ENCODE measurements at regions of chr5 and their contacts with region 1.

Region 1: DNA sequence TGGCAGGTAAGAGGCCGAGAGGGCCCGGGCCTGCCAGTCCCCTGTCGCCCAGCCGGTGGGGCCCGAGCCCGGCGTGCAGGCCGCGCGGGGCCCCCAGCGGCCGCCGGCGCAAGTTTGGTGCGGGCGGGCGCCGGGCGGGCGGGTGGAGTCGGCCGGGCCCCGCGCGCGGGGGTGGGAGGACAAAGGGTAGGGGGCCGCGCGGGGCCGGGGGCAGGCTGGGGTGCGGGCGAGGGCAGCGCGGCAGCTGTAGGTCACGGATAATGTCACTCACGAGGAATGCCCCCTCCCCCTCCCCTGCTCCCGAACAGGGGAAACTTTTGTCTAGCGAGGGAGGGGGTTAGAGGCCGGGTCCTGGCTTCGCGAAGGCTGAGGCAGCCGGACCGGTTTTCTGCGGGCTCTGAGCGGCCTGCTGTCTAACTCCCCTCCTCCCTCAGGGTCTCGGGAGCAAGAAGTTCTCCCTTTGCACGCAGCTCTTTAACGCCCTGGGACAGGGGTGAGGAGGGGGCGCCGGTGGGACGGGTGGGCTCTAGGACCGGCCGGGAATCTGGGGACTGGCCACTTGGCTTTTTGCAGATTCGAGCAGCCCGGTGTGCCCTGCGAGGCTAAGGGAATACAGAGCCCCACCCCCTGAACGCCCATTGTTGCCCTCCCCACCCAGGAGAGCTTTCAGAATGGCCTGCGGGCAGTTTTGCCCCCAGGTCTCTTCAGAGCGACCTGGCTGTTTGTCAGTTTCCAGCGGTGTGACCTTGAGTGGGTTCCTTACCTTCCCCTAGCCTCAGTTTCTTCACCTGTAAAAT is 21.3 kb upstream of the NDST1 start:
- DNase-seq: peak; percentile 76
- ATAC-seq: peak; percentile 38
- H3K4me3 Mint-ChIP-seq: peak overlapping the region; percentile 79
- H3K27ac Mint-ChIP-seq: peak overlapping the region; percentile 85
- H3K4me1 Mint-ChIP-seq: peaks cover 53% of the 10 kb centered on the region
- H3K27me3 Mint-ChIP-seq: no peaks in the 10 kb centered on the region
- CTCF ChIP-seq: no peak

Region 2: DNA sequence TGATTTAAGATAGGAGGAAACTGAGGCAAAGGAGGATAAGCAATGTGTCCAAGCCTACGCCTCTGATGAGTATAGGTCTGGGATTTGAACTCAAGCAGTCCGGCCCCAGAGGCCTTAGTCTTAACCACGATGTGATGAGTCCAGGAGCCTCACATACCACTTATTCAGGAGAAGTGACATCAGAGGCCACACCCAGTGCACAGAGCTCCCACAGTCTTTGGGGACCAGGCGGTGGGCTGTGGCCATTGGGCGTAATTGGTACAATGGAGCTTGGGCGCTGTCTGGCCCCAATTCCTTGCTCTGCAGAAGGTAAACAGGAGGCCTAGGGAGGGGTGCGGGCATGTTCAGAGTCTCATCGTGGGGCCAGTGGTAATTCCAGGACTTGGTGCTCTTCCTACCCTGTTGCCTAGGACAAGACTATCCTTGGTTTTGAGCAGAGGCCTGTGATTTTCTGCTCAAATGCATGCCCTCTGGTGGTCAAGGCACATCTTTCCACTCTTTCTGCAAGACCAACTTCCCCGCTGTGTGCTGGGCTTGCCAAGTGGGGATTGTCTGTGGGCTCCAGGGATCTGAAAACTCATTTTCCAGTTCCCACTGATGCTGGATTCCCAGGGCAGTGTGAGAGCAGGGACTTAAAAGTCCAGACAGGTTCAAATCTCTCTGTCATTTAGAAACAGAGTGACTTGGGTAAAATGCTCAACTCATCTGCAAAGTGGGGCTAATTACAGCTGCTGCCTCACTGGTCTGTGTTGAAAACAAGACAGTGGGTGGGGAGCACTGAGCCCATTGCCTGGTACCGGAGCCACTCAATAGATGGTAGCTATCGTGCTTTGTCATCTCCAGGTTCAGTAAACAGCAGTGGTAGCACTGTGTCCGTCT is 37.1 kb after region 1 on chr5:
- CTCF ChIA-PET with region 1: interaction called, 6 read pairs
- POLR2A ChIA-PET with region 1: no interaction called
- intact Hi-C with region 1: loop called (anchors 1 kb)
- DNase-seq: no peak
- ATAC-seq: peak; percentile 65
- H3K4me3 Mint-ChIP-seq: no peak overlapping the region
- H3K27ac Mint-ChIP-seq: no peak overlapping the region
- H3K4me1 Mint-ChIP-seq: no peaks in the 10 kb centered on the region
- H3K27me3 Mint-ChIP-seq: no peaks in the 10 kb centered on the region
- CTCF ChIP-seq: no peak